Left ventricle myocardium inferior (tissue), 1 donor: ENCODE measurements at regions of chr10 and their contacts with region 1.

Region 1: DNA sequence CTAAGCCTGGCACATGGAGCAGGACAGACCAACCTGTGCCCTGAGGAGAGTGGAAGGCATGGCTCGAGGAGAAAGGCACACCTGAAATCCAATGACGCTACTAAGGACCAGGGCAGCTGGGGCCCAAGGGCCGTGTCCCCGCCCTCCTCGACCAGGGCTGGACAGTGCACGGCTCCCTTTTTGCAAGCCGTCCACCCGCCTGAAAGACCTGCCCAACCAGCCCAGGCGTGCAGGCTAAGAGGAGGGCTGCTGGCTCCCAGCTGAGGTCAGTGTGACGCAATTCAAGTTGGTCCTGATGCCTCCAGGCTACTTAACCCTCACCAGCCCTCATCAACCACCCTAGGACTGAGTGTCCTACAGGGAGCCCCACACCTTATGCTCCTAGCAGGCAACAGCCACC is 69.3 kb downstream of the DLG5 start:
- DNase-seq: no peak
- H3K4me3 ChIP-seq: no peak overlapping the region
- H3K27ac ChIP-seq: no peak overlapping the region
- H3K4me1 ChIP-seq: no peaks in the 10 kb centered on the region
- H3K27me3 ChIP-seq: no peaks in the 10 kb centered on the region
- CTCF ChIP-seq: no peak

Region 2: GRCh38 chr10:77983384-77984341 is 126.4 kb after region 1 on chr10:
- intact Hi-C with region 1: loop called (anchors 10 kb)
- DNase-seq: no peak
- H3K4me3 ChIP-seq: no peak overlapping the region
- H3K27ac ChIP-seq: no peak overlapping the region
- H3K4me1 ChIP-seq: peaks cover 16% of the 10 kb centered on the region
- H3K27me3 ChIP-seq: no peaks in the 10 kb centered on the region
- CTCF ChIP-seq: no peak

Region 3: DNA sequence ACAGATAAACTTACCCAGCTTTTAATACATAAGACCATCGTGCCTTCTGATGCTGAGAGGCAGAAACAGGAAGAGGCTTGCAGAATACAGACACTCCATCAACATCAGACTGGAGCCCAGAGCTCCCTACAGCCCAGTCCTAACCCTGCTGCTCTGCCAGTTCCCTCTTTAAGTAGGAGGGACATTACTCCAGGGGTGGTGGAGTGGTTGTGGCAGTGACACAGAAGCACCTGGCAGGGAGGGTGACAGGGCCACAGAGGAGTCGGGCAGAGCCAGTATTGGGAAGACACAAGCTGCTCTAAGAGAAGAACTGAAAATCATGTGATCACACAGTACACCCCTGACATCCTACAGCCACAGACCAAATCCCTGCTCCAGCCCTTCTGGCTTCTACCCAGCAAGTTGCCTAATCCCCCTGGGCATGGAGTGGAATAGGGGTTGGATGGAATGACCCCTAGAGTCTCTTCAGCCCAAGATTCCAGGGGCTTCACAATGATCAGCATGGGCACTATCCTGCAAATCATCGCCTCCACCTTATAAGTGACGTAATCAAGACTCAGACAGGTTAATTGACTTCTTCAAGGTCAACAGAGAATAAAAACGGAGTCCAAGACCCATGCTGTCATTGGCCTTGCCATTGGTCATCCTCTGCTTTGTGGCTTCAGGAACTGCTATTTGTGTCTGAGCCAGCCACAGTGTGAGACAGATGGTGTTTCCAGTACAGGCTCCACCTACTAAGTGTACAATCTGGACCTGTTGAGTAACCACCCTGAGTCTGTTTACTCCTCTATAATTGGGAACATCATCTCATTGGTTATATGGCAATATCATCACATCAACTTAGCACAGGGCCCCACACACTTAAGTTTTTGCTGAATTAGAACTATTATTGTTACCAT is 1150.4 kb after region 1 on chr10:
- intact Hi-C with region 1: no loop called
- DNase-seq: no peak
- H3K4me3 ChIP-seq: no peak overlapping the region
- H3K27ac ChIP-seq: no peak overlapping the region
- H3K4me1 ChIP-seq: peaks cover 15% of the 10 kb centered on the region
- H3K27me3 ChIP-seq: no peaks in the 10 kb centered on the region
- CTCF ChIP-seq: no peak